HEK293 (cell line): ENCODE measurements at regions of chr1 and their contacts with region 1.

Region 1: DNA sequence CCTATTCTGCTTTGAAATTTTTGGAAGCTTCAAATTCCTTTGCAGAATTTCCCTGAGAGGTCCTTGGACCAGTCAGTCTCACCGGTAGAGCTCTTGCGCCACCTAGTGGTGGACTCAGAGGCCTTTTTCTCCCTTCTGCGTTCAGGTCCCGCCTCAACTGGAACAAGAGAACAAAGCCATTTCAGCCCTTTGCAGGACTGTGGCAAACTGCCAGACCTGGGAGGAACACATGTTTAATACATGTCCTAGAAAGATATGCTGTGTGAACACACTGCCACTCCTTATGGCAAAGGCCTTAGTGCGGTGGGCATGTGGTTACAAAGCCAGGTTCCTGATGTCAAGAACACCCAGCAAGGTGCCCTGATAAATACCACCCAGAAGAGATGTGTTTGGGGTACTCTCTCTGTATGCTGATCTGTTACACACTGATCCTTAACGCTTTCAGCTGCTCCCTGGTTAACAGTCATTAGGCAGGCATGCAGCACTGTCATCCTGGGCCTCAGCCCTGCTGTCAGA is 82.2 kb upstream of the SSX2IP start:
- H3K4me3 ChIP-seq: no peak overlapping the region
- H3K27ac ChIP-seq: no peak overlapping the region
- H3K4me1 ChIP-seq: no peaks in the 10 kb centered on the region
- CTCF ChIP-seq: peak; percentile 73

Region 2: DNA sequence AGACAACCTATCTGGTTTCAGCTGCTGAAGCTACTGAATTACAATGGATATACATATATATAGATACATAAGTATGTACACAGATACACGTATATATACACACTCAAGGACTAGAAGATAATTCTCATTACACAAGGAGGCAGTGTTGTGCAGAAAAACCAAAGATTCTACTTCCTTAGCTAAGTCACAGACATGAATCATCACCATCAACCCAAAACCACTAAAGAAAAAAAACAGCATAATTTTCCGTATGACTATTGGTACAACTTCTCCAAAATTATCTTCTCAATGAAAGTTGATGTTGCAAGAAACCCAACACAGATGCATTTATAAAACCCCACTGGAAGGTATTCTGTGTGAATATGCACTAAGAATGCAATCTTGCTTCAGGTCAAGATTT is 330.2 kb before region 1 on chr1:
- CTCF ChIA-PET with region 1: interaction called, 13 read pairs
- POLR2A ChIA-PET with region 1: no interaction called
- H3K4me3 ChIP-seq: no peak overlapping the region
- H3K27ac ChIP-seq: no peak overlapping the region
- H3K4me1 ChIP-seq: no peaks in the 10 kb centered on the region
- CTCF ChIP-seq: no peak

Region 3: GRCh38 chr1:84758968-84759491 is 13.5 kb before region 1 on chr1:
- CTCF ChIA-PET with region 1: interaction called, 57 read pairs
- POLR2A ChIA-PET with region 1: no interaction called
- H3K4me3 ChIP-seq: no peak overlapping the region
- H3K27ac ChIP-seq: no peak overlapping the region
- H3K4me1 ChIP-seq: no peaks in the 10 kb centered on the region
- CTCF ChIP-seq: no peak

Region 4: GRCh38 chr1:84936116-84936810 is 163.8 kb after region 1 on chr1:
- CTCF ChIA-PET with region 1: interaction called, 15 read pairs
- POLR2A ChIA-PET with region 1: no interaction called
- H3K4me3 ChIP-seq: no peak overlapping the region
- H3K27ac ChIP-seq: no peak overlapping the region
- H3K4me1 ChIP-seq: no peaks in the 10 kb centered on the region
- CTCF ChIP-seq: peak; percentile 88